KBM-7 (cell line): ENCODE measurements at regions of chr14 and their contacts with region 1.

Region 1: DNA sequence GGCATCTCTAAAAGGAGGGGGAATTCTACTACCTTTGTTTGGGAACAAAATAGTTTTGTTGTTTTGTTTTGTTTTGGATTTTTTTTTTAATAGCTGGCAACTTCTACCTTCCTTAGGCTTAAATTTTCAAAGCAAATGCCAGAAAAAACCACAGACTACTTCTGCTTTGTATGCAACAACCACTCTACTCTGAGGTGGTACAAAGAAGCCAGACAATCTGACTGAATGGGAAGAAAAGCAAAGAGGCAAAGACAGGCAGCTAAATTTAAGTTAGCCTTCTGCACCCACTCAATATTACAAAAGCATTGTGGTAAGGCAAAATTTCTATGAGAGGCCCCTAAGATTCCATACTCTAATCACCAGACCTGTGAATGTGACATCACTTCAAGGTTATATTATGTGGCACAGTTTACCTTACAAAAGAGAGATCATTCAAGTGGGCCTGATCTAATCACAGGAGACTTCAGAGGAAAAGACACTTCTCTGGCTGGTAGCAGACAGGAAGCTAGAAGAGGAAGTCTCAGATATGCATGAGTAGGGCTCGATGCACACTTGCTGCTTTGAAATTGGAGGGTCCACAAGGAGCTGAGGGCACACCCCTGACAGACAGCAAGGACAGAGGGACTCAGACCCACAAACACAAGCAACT is 566.6 kb downstream of the RPS29 start:
- DNase-seq: peak; percentile 12

Region 2: GRCh38 chr14:48490756-48491155 is 528.8 kb before region 1 on chr14:
- in situ Hi-C with region 1: no loop called
- DNase-seq: no peak

Region 3: DNA sequence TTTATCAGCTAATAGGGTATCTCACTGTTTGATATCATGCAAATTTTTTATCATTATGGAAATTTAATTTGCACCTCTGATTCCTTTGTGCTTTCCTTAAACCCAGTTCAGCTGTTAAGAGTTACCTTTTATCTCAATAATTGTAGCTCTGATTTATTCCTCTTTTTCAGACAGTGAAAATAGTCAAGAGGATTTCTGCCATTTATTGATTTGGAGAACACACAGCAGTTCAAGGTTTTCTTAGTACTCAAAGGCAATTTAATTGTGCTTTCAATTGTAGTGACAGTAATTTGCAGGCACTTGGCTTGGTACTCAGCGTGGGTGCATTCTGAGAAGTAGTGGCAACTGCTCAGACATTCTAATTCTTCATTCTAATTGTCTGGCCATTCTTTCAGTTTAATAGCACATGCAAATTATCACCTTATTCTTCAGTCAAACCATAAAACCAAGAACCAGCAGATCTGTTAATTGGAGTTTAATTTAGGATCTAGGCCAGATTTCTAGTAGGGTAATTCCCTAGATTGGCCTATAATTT is 142.7 kb before region 1 on chr14:
- in situ Hi-C with region 1: loop called (anchors 5 kb)
- DNase-seq: no peak